IMR-90 (cell line): ENCODE measurements at regions of chr2 and their contacts with region 1.

Region 1: DNA sequence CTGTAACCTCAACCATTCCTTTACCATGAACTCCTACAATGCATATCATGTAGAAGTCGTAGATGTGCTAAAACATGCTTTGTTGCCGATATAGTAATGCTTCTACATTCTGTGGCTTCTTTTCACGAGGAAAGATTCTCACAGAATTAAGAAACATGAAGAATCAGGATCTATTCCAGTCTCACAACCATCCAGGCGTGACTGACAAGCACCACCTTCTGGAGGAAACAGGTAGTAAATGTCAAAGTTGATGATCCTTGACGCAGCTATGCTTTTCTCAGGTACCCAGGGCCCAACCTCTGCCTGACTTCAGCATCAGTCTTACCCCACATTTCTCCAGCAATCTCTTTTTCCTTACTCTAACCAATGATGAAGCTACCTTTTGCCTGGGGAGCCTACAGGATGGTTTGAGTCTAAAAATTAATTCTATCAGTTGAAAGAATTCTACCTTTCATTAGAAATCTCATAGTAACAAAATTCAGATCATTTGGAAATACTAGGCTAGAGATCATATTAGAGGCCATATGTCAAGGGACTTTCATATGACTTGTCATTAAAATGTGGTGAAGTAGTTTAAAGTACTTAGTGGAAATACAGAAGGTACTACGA is 123.3 kb upstream of the RND3 start:
- DNase-seq: peak; percentile 69
- ATAC-seq: peak; percentile 16; the same call in 1 of the 2 replicates
- H3K4me3 ChIP-seq: no peak overlapping the region
- H3K27ac ChIP-seq: peak overlapping the region; percentile 49; the same call in 1 of the 2 replicates
- H3K4me1 ChIP-seq: peaks cover 13% of the 10 kb centered on the region
- H3K27me3 ChIP-seq: no peaks in the 10 kb centered on the region
- CTCF ChIP-seq: peak; percentile 65
- POLR2A ChIP-seq: no peak
- RAD21 ChIP-seq: peak; percentile 87

Region 2: DNA sequence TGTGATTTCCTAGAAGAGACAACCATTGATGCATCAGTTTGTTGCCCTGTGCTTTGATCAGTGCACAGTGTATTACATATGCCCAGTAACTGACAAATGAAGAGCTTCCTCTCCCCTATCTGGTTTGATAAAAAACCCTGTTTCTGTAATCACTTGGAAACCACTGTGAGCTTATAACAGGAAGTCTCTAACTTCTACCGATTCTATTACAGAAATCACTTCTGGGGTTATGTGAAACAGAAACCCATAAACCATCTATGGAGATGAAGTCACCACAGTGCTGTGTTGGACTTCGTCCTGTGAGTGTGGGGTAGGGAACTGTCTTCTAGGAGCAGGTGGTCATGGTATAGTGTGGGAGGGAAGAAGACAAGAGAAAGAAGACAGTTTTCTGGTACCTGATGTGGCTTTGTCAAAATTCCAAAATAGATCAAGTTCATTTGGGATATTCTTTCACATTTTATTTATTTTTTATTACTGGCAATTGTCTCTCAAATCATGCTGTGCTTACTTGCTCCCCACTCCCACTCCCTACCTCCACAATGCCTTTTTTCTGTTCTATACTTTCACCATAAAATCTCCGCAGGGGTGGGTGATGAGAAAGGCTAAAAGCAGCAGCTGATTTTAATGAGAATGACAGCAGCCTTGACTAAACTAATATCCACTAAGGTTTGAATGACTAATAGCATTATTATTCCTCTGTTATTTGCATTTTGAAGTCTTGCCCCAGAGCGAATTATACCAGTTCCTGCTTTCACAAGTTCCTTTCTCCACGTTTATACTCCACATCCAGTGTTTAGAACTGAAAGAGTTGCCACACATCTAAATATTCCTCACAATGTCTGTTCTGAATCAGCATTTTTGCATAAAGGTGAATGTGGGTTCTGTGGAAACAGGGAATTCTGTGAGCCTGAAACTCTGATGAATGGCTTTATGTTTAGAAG is 81.6 kb before region 1 on chr2:
- CTCF ChIA-PET with region 1: no interaction called
- POLR2A ChIA-PET with region 1: no interaction called
- dilution Hi-C with region 1: no loop called
- in situ Hi-C with region 1: no loop called
- intact Hi-C with region 1: loop called (anchors 1 kb)
- DNase-seq: peak; percentile 79
- ATAC-seq: peak; percentile 47
- H3K4me3 ChIP-seq: peak overlapping the region; percentile 5; the same call in 1 of the 2 replicates
- H3K27ac ChIP-seq: peak overlapping the region; percentile 90
- H3K4me1 ChIP-seq: peaks cover 29% of the 10 kb centered on the region
- H3K27me3 ChIP-seq: no peaks in the 10 kb centered on the region
- CTCF ChIP-seq: no peak
- POLR2A ChIP-seq: no peak
- RAD21 ChIP-seq: no peak

Region 3: GRCh38 chr2:150570712-150571111 is 40.1 kb before region 1 on chr2:
- CTCF ChIA-PET with region 1: interaction called, 4 read pairs
- POLR2A ChIA-PET with region 1: no interaction called
- dilution Hi-C with region 1: no loop called
- in situ Hi-C with region 1: no loop called
- intact Hi-C with region 1: loop called (anchors 1 kb)
- DNase-seq: peak; percentile 96
- ATAC-seq: peak; percentile 80
- H3K4me3 ChIP-seq: no peak overlapping the region
- H3K27ac ChIP-seq: peak overlapping the region; percentile 98; the same call in 1 of the 2 replicates
- H3K4me1 ChIP-seq: peaks cover 24% of the 10 kb centered on the region
- H3K27me3 ChIP-seq: no peaks in the 10 kb centered on the region
- CTCF ChIP-seq: no peak
- POLR2A ChIP-seq: no peak
- RAD21 ChIP-seq: no peak

Region 4: DNA sequence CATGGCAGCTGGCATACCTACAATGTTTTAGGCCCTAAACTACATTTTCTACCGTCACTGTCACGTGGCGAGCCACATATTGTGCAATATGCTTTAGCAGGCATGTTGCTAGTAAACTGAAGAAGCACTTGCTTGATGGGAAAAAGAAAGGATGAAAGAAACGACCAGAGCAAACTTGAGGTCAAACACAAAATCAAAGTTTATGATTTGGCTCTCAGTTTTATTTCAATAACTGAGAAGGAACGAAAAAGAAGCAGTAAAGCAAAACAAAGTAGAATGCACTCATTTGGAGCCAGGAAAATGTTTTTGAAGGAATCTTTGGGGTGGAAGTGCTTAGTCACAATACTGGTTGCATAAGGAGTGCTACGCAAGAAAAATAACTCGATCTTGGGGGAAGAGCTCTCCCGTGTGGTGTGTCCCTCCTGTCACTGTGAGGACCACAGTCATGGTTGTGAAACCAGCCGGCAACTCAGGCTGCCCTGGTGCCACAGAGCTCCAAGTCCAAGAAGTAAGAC is 301.0 kb after region 1 on chr2:
- CTCF ChIA-PET with region 1: interaction called, 6 read pairs
- POLR2A ChIA-PET with region 1: no interaction called
- dilution Hi-C with region 1: no loop called
- in situ Hi-C with region 1: no loop called
- intact Hi-C with region 1: loop called (anchors 1 kb)
- DNase-seq: peak; percentile 95
- ATAC-seq: peak; percentile 95
- H3K4me3 ChIP-seq: peak overlapping the region; percentile 17; the same call in 1 of the 2 replicates
- H3K27ac ChIP-seq: peak overlapping the region; percentile 43
- H3K4me1 ChIP-seq: peaks cover 7% of the 10 kb centered on the region; the same call in 1 of the 2 replicates
- H3K27me3 ChIP-seq: no peaks in the 10 kb centered on the region
- CTCF ChIP-seq: peak; percentile 54
- POLR2A ChIP-seq: no peak
- RAD21 ChIP-seq: peak; percentile 69

Region 5: GRCh38 chr2:151032741-151033191 is 422.0 kb after region 1 on chr2:
- CTCF ChIA-PET with region 1: no interaction called
- POLR2A ChIA-PET with region 1: no interaction called
- dilution Hi-C with region 1: no loop called
- in situ Hi-C with region 1: no loop called
- intact Hi-C with region 1: loop called (anchors 5 kb)
- DNase-seq: peak; percentile 100
- ATAC-seq: peak; percentile 85
- H3K4me3 ChIP-seq: no peak overlapping the region
- H3K27ac ChIP-seq: peak overlapping the region; percentile 71; the same call in 1 of the 2 replicates
- H3K4me1 ChIP-seq: peaks cover 5% of the 10 kb centered on the region
- H3K27me3 ChIP-seq: no peaks in the 10 kb centered on the region
- CTCF ChIP-seq: no peak
- POLR2A ChIP-seq: no peak
- RAD21 ChIP-seq: no peak

Region 6: GRCh38 chr2:151051574-151052220 is 440.9 kb after region 1 on chr2:
- CTCF ChIA-PET with region 1: interaction called, 4 read pairs
- POLR2A ChIA-PET with region 1: no interaction called
- dilution Hi-C with region 1: no loop called
- in situ Hi-C with region 1: no loop called
- intact Hi-C with region 1: loop called (anchors 5 kb)
- DNase-seq: peak; percentile 67
- ATAC-seq: peak; percentile 71
- H3K4me3 ChIP-seq: no peak overlapping the region
- H3K27ac ChIP-seq: no peak overlapping the region
- H3K4me1 ChIP-seq: peaks cover 2% of the 10 kb centered on the region; the same call in 1 of the 2 replicates
- H3K27me3 ChIP-seq: no peaks in the 10 kb centered on the region
- CTCF ChIP-seq: peak; percentile 71
- POLR2A ChIP-seq: no peak
- RAD21 ChIP-seq: peak; percentile 71

Region 7: DNA sequence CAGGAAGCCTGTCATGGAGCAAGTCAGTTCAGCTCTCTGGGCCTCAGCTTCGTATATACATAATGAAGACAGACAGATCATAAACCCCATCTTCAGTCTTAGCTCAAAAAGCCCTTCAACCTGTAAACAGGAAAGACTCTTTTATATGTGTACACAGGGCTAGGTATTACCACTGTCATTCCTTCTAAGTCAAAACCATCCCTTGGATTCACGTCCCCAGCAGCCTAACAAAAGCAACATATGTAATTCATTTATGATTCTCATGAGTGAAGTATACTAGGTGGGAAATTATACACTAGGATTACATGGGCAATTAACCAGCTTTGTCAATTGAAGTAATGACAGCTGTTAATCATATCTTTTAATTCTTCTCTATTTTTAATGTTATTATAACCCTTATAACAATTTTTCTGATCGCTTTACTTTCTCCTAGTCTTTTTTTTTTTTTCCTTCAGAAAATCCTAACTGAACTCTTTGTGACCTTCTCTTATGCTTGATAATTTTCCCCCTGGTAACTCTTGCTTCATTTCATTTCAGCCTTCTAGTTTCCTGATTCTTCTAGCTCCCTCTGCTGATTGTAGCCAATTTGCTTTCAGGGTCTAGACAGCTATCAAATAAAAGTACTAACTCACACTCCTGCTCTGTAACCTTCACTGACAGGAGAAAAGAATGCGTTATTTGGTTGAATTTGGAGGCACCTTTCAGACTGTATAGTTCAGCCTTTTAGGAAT is 551.2 kb after region 1 on chr2:
- CTCF ChIA-PET with region 1: no interaction called
- POLR2A ChIA-PET with region 1: no interaction called
- dilution Hi-C with region 1: no loop called
- in situ Hi-C with region 1: no loop called
- intact Hi-C with region 1: loop called (anchors 5 kb)
- DNase-seq: peak; percentile 70
- ATAC-seq: peak; percentile 84
- H3K4me3 ChIP-seq: no peak overlapping the region
- H3K27ac ChIP-seq: no peak overlapping the region
- H3K4me1 ChIP-seq: no peaks in the 10 kb centered on the region; the same call in 1 of the 2 replicates
- H3K27me3 ChIP-seq: no peaks in the 10 kb centered on the region; the same call in 1 of the 2 replicates
- CTCF ChIP-seq: peak; percentile 53
- POLR2A ChIP-seq: no peak
- RAD21 ChIP-seq: peak; percentile 56